ENCODE measurements at regions of chr3 and their contacts with region 1.

Region 1: GRCh38 chr3:9441501-9442221 is 44.2 kb downstream of the SETD5 start:
- DNase-seq: no peak
- ATAC-seq: no peak
- H3K4me3 ChIP-seq: no peak overlapping the region
- H3K27ac ChIP-seq: no peak overlapping the region
- H3K4me1 ChIP-seq: no peaks in the 10 kb centered on the region
- H3K27me3 ChIP-seq: no peaks in the 10 kb centered on the region
- CTCF ChIP-seq: no peak

Region 2: GRCh38 chr3:9476935-9477334 is 35.3 kb after region 1 on chr3:
- intact Hi-C with region 1: loop called in 1 of 2 experiments (anchors 5 kb)
- DNase-seq: no peak
- ATAC-seq: no peak
- H3K4me3 ChIP-seq: no peak overlapping the region
- H3K27ac ChIP-seq: no peak overlapping the region
- H3K4me1 ChIP-seq: no peaks in the 10 kb centered on the region
- H3K27me3 ChIP-seq: no peaks in the 10 kb centered on the region
- CTCF ChIP-seq: no peak